Activated T-helper 2 cell treated with anti-CD3 and anti-CD28 coated beads, Interferon-gamma antibody, Interleukin-2, Interleukin-4, amounts not matched to agents 10 μg/mL and 5 μg/mL and 100 μg/mL, durations not matched to agents 14 hours and 24 hours and 36 hours (primary cell): ENCODE measurements at regions of chr22 and their contacts with region 1.

Region 1: DNA sequence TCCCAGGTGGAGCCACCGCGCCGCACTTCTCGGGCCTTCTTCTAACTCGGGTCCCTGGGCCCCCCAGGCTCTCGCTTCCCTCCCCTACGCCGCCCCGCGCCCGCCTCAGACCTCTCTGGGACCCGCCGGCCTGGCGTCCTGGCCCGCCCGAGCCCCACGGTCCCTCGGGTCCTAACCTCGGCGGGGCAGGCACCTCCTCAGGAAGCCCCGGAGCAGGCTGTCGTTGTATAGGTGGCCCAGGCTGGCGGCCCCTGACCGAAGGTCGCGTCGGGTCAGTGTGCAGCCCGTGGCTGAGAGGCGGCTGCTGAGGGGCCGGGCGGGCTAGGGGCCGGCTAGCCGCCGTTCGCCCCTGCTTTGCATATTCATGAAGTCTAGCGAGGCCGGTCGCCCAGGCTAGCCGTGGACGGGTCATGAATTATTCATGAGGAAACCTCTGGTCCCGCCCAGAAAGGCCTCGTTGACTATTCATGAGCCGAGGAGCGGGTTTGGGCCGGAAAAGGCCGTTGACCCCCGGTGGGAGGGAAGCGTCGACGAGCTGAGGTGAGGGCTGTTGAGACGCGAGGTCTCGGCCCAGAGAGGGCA is at the start of gene HORMAD2:
- DNase-seq: no peak
- H3K4me3 Mint-ChIP-seq: no peak within 1 kb of the TSS
- H3K27ac Mint-ChIP-seq: no peak within 1 kb of the TSS
- H3K4me1 Mint-ChIP-seq: peaks cover 13% of the 10 kb centered on the region
- H3K27me3 Mint-ChIP-seq: peaks cover 15% of the 10 kb centered on the region
- total RNA-seq, gene HORMAD2: 0.48 and 0.53 TPM in 2 replicates

Region 2: DNA sequence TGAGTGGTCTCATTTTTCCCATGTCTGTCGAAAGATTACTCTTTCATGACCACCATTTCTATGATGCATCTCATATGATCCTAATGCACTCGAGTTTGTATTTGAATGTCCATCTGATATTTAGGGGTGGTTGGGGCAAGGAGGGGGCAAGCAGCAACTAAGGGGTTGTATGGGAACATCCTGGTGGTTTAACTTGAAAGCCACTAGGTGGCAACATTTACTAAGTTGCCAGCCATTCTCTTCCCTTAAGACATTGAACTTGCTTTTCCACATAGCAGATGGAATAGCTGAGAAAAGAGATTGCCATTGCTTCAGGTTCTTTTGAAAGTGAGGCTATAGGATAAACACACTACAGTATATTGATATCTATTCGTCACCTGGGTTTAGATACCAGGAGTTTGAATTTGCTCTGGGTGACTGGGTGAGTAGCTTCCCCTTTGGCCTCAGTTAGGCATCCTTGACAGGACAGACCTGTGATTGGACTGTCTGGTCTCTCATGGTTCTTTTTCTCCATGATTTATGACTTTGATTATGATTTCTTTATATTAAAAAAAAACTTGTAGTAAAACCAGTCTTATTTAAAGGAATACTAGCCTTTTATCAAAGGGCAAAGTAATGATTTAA is 444.2 kb before region 1 on chr22:
- intact Hi-C with region 1: loop called (anchors 10 kb)
- DNase-seq: no peak
- H3K4me3 Mint-ChIP-seq: no peak overlapping the region
- H3K27ac Mint-ChIP-seq: no peak overlapping the region
- H3K4me1 Mint-ChIP-seq: peaks cover 28% of the 10 kb centered on the region
- H3K27me3 Mint-ChIP-seq: no peaks in the 10 kb centered on the region

Region 3: GRCh38 chr22:29820961-29821789 is 258.9 kb before region 1 on chr22:
- intact Hi-C with region 1: loop called (anchors 10 kb)
- DNase-seq: peak; percentile 23
- H3K4me3 Mint-ChIP-seq: no peak overlapping the region
- H3K27ac Mint-ChIP-seq: peak overlapping the region; percentile 87
- H3K4me1 Mint-ChIP-seq: peaks cover 16% of the 10 kb centered on the region
- H3K27me3 Mint-ChIP-seq: no peaks in the 10 kb centered on the region

Region 4: GRCh38 chr22:30047364-30047738 is 32.7 kb before region 1 on chr22:
- intact Hi-C with region 1: no loop called
- DNase-seq: peak; percentile 37
- H3K4me3 Mint-ChIP-seq: no peak overlapping the region
- H3K27ac Mint-ChIP-seq: no peak overlapping the region
- H3K4me1 Mint-ChIP-seq: peaks cover 14% of the 10 kb centered on the region
- H3K27me3 Mint-ChIP-seq: peaks cover 1% of the 10 kb centered on the region